CD4-positive, alpha-beta memory T cell (primary cell): ENCODE measurements at regions of chr2 and their contacts with region 1.

Region 1: DNA sequence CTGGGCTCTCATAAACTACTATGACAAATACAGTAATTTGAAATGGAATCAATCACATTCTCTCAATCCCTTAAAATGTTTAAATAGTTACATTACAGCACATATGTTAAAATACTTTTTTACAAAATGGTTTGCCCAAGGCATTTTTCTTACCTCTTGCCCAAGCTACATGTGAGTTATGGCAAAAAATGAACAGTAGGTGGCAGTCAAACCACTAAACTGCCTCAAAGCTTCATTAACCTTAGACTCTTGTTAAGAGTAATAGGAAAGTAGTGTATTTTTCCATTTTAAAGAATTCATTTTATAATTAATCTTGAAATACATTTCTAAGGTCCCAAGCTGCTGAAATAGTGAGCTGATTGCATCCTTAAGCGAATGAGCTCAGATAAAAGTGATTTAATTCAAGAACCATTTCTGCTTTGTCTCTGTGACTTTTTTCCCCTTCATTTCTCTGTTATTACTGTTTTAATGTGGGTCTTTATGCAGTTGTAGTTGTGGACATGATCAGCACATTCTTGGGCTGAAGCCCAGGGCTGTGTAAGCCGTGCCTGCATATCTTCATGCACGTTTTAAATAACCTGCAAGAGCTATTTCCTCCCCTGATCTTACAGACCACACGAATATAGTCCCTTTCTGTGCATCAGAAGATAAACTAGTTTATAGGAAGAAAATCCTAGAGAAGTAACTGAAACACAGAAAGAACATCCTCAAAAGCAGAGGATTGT is 311.8 kb downstream of the LNPK start:
- DNase-seq: peak in 4 of 5 donors; percentile 23 to 48 (median 26)
- H3K4me3 ChIP-seq: no peak overlapping the region
- H3K4me3 Mint-ChIP-seq: no peak overlapping the region
- H3K27ac ChIP-seq: no peak overlapping the region
- H3K27ac Mint-ChIP-seq: peak overlapping the region in 1 of 7 donors; percentile 19
- H3K4me1 ChIP-seq: no peaks in the 10 kb centered on the region
- H3K4me1 Mint-ChIP-seq: no peaks in the 10 kb centered on the region
- H3K27me3 ChIP-seq: no peaks in the 10 kb centered on the region
- H3K27me3 Mint-ChIP-seq: peaks cover 14 to 15% of the 10 kb centered on the region in 2 donors

Region 2: DNA sequence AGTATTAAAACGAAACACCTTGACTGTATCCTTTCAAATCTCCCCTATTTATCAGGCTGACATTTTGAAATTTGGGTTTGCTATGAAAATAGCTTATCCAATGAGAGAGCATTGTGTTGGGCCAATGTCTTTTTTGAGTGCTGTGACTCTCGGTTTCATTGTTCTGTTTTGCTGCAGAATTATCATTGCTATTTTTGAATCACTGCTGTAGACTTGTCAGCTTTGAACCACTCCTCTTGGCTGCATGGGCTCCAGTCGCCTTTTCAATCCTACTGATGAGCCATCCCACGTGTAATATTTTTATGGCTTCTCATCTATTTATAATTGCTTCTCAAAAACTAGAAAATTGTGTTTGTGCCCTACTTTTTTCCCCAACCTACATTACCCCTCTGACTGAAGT is 11.0 kb before region 1 on chr2:
- CTCF ChIA-PET with region 1: interaction called, 15 read pairs
- POLR2A ChIA-PET with region 1: no interaction called
- intact Hi-C with region 1: no loop called
- DNase-seq: no peak
- H3K4me3 ChIP-seq: no peak overlapping the region
- H3K4me3 Mint-ChIP-seq: no peak overlapping the region
- H3K27ac ChIP-seq: no peak overlapping the region
- H3K27ac Mint-ChIP-seq: no peak overlapping the region
- H3K4me1 ChIP-seq: no peaks in the 10 kb centered on the region
- H3K4me1 Mint-ChIP-seq: no peaks in the 10 kb centered on the region
- H3K27me3 ChIP-seq: no peaks in the 10 kb centered on the region
- H3K27me3 Mint-ChIP-seq: peaks cover 2 to 6% of the 10 kb centered on the region in 2 donors

Region 3: GRCh38 chr2:175914846-175915245 is 224.6 kb after region 1 on chr2:
- CTCF ChIA-PET with region 1: no interaction called
- POLR2A ChIA-PET with region 1: no interaction called
- intact Hi-C with region 1: no loop called
- DNase-seq: no peak
- H3K4me3 ChIP-seq: no peak overlapping the region
- H3K4me3 Mint-ChIP-seq: no peak overlapping the region
- H3K27ac ChIP-seq: no peak overlapping the region
- H3K27ac Mint-ChIP-seq: no peak overlapping the region
- H3K4me1 ChIP-seq: no peaks in the 10 kb centered on the region
- H3K4me1 Mint-ChIP-seq: no peaks in the 10 kb centered on the region
- H3K27me3 ChIP-seq: no peaks in the 10 kb centered on the region
- H3K27me3 Mint-ChIP-seq: peaks cover 9 to 11% of the 10 kb centered on the region in 2 donors

Region 4: GRCh38 chr2:176088048-176088936 is 398.0 kb after region 1 on chr2:
- CTCF ChIA-PET with region 1: interaction called, 5 read pairs
- POLR2A ChIA-PET with region 1: no interaction called
- intact Hi-C with region 1: loop called (anchors 2 kb)
- DNase-seq: no peak
- H3K4me3 ChIP-seq: peak overlapping the region in 1 of 2 donors; percentile 22
- H3K4me3 Mint-ChIP-seq: peak overlapping the region; percentile 44 to 79 (median 67)
- H3K27ac ChIP-seq: no peak overlapping the region
- H3K27ac Mint-ChIP-seq: peak overlapping the region in 5 of 7 donors; percentile 17 to 91 (median 57)
- H3K4me1 ChIP-seq: peaks cover 11% of the 10 kb centered on the region
- H3K4me1 Mint-ChIP-seq: peaks cover 8 to 64% (median 18%) of the 10 kb centered on the region in 4 donors
- H3K27me3 ChIP-seq: peaks cover 88% of the 10 kb centered on the region
- H3K27me3 Mint-ChIP-seq: peaks cover 68 to 76% of the 10 kb centered on the region in 2 donors